ENCODE measurements at regions of chr12 and their contacts with region 1.

Region 1: DNA sequence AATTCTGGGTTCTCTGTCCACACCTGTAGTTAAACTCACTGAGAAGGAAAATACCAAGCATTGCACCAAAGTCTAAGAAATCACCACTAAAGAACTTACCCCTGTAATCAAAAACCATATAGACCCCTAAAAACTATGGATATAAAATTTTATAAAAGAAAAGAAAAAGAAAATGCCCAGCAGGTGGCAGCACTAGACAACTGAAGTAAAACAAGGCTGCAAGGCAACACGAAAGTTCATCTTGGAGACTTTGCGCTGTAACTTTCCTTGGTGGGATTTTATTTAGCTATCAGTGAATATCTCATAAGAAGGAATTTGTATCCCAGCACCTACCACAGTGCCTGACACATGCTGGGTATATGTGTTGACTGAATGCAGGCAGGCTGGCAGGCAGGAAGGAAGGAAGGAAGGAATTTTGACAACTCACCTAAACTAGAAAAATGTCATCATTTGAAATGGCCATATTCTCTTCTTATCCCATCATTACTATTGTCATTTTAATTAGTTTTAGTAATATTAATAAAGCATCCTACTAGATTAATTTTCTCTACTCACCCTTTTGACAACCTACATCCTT is 68.2 kb upstream of the ETV6 start:
- DNase-seq: peak; percentile 70
- ATAC-seq: no peak
- H3K4me3 Mint-ChIP-seq: no peak overlapping the region
- H3K27ac Mint-ChIP-seq: no peak overlapping the region
- H3K4me1 Mint-ChIP-seq: peaks cover 9% of the 10 kb centered on the region
- H3K27me3 Mint-ChIP-seq: peaks cover 28% of the 10 kb centered on the region

Region 2: GRCh38 chr12:11553871-11554533 is 27.3 kb before region 1 on chr12:
- CTCF ChIA-PET with region 1: interaction called, 11 read pairs
- DNase-seq: peak; percentile 75
- ATAC-seq: peak; percentile 85
- H3K4me3 Mint-ChIP-seq: no peak overlapping the region
- H3K27ac Mint-ChIP-seq: no peak overlapping the region
- H3K4me1 Mint-ChIP-seq: peaks cover 17% of the 10 kb centered on the region
- H3K27me3 Mint-ChIP-seq: peaks cover 24% of the 10 kb centered on the region

Measured in activated CD8-positive, alpha-beta memory T cell treated with anti-CD3 and anti-CD28 coated beads, Interleukin-2, amount 10 ng/mL, durations not matched to agents 7 days and 5 days (primary cell).